ENCODE measurements at regions of chr18 and their contacts with region 1.

Region 1: DNA sequence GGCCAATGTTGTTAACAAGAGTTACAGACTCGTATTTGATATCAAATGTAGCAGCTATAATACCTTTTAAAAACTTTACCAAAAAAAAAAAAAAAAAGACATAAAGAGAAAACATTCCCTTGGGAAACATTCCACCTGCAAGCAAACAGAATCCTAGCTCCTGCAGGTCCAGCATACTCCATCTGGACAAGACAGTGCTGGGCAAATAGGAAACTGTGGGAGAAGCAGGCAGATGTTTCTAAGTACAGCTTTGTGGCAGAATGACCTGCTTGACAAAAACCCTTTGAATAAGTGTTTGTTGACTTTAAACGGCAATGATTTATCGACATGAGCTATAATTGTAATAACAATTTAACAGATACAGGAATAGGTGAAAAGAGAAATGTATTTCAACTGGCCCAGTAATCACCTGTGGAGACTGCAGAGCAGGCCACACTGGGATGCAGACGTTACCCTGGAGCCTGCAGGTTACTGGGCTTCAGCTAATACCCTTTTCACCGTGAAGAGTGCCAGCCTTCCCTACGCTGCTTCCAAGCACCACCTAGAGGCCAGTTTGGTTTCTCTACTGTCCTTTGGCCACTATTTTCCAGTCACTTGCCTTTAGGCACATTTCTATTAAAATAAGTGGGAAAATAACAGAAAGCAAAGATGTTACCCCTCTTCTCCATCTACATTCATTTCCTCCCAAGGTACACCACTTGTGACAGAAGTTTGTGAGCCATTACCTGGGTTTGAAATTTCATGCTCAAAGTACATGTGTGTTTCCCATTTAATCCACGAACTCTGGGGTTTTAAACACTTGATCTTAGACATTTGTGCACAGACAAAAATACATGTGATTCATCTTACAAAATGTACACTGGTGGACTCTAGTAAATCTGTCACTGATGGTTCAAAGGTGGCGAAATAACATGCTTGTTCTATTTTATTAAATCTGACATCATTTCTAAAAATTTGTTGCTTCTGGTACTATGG is 96.9 kb upstream of the ZNF397 start:
- DNase-seq: peak in 6 of 9 donors; percentile 16 to 46 (median 42)
- ATAC-seq: peak; percentile 80
- H3K4me3 ChIP-seq: no peak overlapping the region
- H3K4me3 Mint-ChIP-seq: no peak overlapping the region
- H3K27ac ChIP-seq: no peak overlapping the region
- H3K27ac Mint-ChIP-seq: peak overlapping the region in 7 of 9 donors; percentile 4 to 65 (median 53)
- H3K4me1 ChIP-seq: no peaks in the 10 kb centered on the region
- H3K4me1 Mint-ChIP-seq: peaks cover 0 to 14% (median 6%) of the 10 kb centered on the region in 7 donors
- H3K27me3 ChIP-seq: no peaks in the 10 kb centered on the region
- H3K27me3 Mint-ChIP-seq: no peaks in the 10 kb centered on the region

Region 2: DNA sequence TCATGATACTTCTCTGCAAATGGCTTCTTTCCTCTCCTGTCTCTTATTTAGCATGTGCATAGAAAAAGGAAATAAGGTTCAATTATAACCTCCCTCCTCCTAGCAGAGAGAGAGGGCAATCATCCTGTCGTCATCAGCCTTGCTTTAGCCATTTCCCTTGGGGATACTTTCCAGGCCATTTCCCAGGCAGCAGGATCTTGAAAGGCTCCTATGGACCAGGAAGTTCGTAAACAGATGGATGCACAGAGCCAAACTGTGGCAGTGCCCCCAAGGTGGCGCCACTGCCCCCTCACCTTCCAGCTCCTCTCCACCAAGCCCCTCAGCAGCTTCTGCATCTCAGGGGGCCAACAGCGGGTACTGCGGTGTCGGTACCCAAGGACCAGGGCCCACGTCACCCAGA is 276.4 kb before region 1 on chr18:
- CTCF ChIA-PET with region 1: no interaction called
- POLR2A ChIA-PET with region 1: no interaction called
- intact Hi-C with region 1: loop called (anchors 10 kb)
- DNase-seq: no peak
- ATAC-seq: no peak
- H3K4me3 ChIP-seq: no peak overlapping the region
- H3K4me3 Mint-ChIP-seq: no peak overlapping the region
- H3K27ac ChIP-seq: no peak overlapping the region
- H3K27ac Mint-ChIP-seq: no peak overlapping the region
- H3K4me1 ChIP-seq: no peaks in the 10 kb centered on the region
- H3K4me1 Mint-ChIP-seq: peaks cover 0 to 24% (median 9%) of the 10 kb centered on the region in 7 donors
- H3K27me3 ChIP-seq: no peaks in the 10 kb centered on the region
- H3K27me3 Mint-ChIP-seq: peaks cover 0 to 10% (median 0%) of the 10 kb centered on the region in 5 donors

Region 3: DNA sequence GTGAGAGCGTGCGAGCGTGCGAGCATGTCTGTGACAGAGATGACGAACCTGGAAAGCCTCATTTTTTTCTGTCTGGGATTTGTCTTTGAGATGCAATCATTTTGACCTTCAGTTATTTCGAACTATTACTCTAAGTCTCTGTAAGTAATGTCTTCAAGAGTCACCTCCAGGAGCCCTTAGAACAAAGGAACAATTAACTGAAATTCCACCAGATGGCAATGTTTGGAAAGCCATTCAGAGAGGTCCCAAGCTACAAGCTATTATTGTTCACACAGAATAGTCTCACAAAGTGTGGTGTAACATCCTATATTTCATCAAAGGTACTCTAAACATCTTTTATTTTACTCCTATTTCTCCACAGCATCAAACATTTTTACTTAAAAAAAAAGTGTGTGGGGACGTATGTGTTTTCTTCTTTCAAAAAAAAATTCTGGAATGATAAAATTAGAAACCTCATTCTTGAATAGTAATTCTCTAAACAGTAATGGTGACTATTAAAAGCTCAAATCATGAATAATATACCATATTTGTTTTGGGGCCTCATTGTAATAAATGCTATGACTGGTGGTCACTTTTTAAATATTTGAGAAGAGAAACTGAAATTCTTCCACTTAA is 137.8 kb before region 1 on chr18:
- CTCF ChIA-PET with region 1: interaction called, 6 read pairs
- POLR2A ChIA-PET with region 1: no interaction called
- intact Hi-C with region 1: loop called (anchors 1 kb)
- DNase-seq: peak in 7 of 9 donors; percentile 29 to 66 (median 54)
- ATAC-seq: peak; percentile 80
- H3K4me3 ChIP-seq: no peak overlapping the region
- H3K4me3 Mint-ChIP-seq: no peak overlapping the region
- H3K27ac ChIP-seq: no peak overlapping the region
- H3K27ac Mint-ChIP-seq: no peak overlapping the region
- H3K4me1 ChIP-seq: no peaks in the 10 kb centered on the region
- H3K4me1 Mint-ChIP-seq: no peaks in the 10 kb centered on the region
- H3K27me3 ChIP-seq: no peaks in the 10 kb centered on the region
- H3K27me3 Mint-ChIP-seq: no peaks in the 10 kb centered on the region

Measured in naive thymus-derived CD4-positive, alpha-beta T cell (primary cell).